Testis (tissue), 5 donors: ENCODE measurements at regions of chr1 and their contacts with region 1.

Region 1: DNA sequence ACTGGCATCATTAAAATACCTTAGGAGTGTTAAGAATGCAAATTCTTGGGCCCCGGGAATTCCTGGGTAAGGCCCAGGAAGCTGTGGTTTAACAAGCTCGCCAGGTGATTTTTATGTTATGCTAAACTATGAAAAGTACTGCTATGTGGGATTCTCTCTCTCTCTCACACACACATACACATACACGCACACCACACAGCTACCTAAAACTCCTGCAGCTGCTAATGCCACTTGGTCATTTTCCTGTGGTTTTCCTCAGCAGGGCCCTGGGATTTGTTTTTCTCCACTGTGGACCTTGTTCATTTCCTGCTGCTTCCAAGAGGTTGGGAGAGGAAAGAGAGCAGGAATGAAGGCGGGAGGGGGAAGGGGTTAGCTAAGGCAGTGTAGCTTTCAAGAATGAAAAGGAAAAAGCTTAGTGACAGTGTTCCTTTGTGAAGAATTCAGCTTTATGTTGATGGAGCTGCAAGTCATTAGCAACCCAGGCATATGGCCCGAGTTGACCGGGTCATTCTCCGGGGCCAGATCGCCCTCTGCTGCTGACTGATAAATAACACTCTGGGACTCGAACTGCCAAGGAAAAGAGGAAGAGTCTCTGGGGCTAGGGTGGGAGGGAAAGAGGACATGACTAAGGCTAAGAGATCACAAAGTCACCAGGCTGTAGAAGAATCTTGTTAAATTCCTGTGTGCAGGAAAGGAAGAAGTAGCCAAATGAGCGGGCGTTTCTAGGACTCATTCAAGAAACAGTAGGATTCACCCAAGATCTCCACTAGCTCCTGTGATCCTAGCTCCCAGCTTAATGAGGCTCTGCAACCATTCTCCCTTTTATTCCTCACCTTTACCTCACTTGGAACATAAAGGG is 30.5 kb upstream of the LRIG2 start:
- DNase-seq: peak; percentile 85
- H3K4me3 ChIP-seq: no peak overlapping the region
- H3K27ac ChIP-seq: peak overlapping the region in 1 of 2 donors; percentile 12
- H3K4me1 ChIP-seq: peaks cover 23% of the 10 kb centered on the region
- H3K27me3 ChIP-seq: no peaks in the 10 kb centered on the region
- CTCF ChIP-seq: peak; percentile 26 to 57 (median 55)
- POLR2A ChIP-seq: no peak

Region 2: DNA sequence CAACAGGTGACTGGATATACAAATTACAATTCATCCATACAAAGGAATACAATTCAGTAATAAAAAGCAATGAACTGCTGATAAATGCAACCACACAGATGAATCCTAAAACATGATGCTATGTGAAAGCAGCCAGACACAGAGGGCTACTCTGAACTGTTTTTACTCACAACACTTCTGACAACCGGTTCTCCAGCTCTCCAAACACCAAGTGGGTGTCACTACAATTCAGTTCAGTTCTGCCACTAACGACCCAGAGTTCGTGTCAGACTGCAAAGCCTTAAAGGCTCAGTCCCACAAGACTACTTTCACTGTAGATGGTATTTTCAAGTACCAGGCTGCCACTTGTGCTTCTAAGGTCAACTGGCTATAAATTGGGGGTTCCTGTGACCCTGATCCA is 205.9 kb before region 1 on chr1:
- intact Hi-C with region 1: no loop called
- DNase-seq: no peak
- H3K4me3 ChIP-seq: no peak overlapping the region
- H3K27ac ChIP-seq: no peak overlapping the region
- H3K4me1 ChIP-seq: no peaks in the 10 kb centered on the region
- H3K27me3 ChIP-seq: no peaks in the 10 kb centered on the region
- CTCF ChIP-seq: no peak
- POLR2A ChIP-seq: no peak

Region 3: DNA sequence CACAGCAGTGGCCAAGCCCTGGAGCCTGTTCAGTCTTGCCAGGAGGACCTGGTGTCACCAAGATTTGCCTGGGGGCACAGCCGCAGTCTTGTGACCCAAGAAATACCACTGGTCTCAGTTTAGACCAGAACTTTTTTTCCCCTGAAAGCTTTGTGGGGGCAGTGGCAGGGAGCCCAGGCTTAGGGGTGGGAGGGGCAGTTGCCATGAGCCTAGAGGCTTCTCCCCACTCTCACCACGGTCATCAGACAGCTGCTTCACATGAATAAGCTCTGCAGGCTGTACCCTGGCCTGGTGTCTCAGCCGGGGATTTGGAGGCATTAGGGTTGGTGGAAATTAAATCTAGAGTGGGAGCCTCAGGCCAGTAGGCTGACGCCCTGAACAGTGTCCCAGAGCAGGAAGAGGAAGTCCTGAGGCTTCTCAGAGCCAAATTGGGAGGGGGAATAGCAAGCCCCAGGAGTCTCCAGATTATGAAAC is 160.2 kb before region 1 on chr1:
- intact Hi-C with region 1: loop called (anchors 5 kb)
- DNase-seq: no peak
- H3K4me3 ChIP-seq: no peak overlapping the region
- H3K27ac ChIP-seq: peak overlapping the region; percentile 32 to 39
- H3K4me1 ChIP-seq: peaks cover 20% of the 10 kb centered on the region
- H3K27me3 ChIP-seq: no peaks in the 10 kb centered on the region
- CTCF ChIP-seq: no peak
- POLR2A ChIP-seq: no peak

Region 4: GRCh38 chr1:112971006-112971405 is 71.5 kb before region 1 on chr1:
- intact Hi-C with region 1: no loop called
- DNase-seq: no peak
- H3K4me3 ChIP-seq: no peak overlapping the region
- H3K27ac ChIP-seq: no peak overlapping the region
- H3K4me1 ChIP-seq: no peaks in the 10 kb centered on the region
- H3K27me3 ChIP-seq: no peaks in the 10 kb centered on the region
- CTCF ChIP-seq: no peak
- POLR2A ChIP-seq: no peak